Activated CD4-positive, alpha-beta memory T cell treated with anti-CD3 and anti-CD28 coated beads, Interleukin-2, amount 10 ng/mL, durations not matched to agents 7 days and 5 days (primary cell): ENCODE measurements at regions of chr11 and their contacts with region 1.

Region 1: DNA sequence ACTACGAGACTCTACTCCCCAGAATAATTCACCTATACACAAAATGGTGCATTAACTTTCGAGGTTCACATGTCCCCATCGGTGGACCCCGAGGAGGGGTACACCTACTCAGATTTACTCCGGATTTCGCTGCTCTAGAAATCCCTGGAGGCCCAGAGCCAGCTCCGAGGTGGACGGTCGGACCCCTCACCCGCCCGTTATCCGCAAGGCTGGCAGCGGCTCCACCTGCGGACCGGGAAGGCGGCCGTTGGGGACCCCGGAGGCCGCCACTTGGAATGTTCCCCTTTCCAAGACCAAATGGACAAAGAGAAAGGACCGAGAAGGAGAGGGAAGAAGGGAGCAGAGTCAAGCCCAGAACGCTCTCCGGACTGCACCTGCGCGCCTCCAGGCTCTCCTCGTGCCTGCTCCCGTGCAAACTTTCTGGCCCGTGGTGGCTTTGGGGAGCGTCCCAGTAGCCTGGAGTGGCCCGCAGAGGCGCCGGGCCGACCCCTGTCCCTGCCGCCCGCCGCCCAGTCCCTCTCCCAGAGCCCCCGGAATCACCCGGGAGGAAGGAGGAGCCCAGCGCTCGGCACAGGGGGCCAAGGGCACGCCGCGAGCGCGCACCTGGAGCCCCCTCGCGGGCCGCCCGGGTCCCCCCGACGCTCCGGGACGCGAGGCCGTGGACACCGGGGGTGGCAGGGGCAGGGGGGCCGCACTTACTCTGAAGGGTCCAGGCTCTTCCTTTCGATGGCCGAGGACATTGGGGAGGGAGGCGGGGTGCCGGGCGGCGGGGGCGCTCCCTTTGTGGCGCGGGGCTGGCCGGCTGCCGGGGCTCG is 23.0 kb downstream of the LMO2 start:
- DNase-seq: no peak
- H3K4me3 Mint-ChIP-seq: no peak overlapping the region
- H3K27ac Mint-ChIP-seq: no peak overlapping the region
- H3K4me1 Mint-ChIP-seq: peaks cover 11% of the 10 kb centered on the region
- H3K27me3 Mint-ChIP-seq: peaks cover 75% of the 10 kb centered on the region

Region 2: GRCh38 chr11:33857933-33858371 is 10.9 kb before region 1 on chr11:
- CTCF ChIA-PET with region 1: interaction called, 11 read pairs
- POLR2A ChIA-PET with region 1: no interaction called
- DNase-seq: peak; percentile 71
- H3K4me3 Mint-ChIP-seq: no peak overlapping the region
- H3K27ac Mint-ChIP-seq: no peak overlapping the region
- H3K4me1 Mint-ChIP-seq: no peaks in the 10 kb centered on the region
- H3K27me3 Mint-ChIP-seq: peaks cover 62% of the 10 kb centered on the region

Region 3: GRCh38 chr11:33881651-33882503 is 13.0 kb after region 1 on chr11:
- CTCF ChIA-PET with region 1: no interaction called
- POLR2A ChIA-PET with region 1: no interaction called
- DNase-seq: no peak
- H3K4me3 Mint-ChIP-seq: no peak overlapping the region
- H3K27ac Mint-ChIP-seq: no peak overlapping the region
- H3K4me1 Mint-ChIP-seq: no peaks in the 10 kb centered on the region
- H3K27me3 Mint-ChIP-seq: peaks cover 78% of the 10 kb centered on the region

Region 4: GRCh38 chr11:33899383-33900037 is 30.7 kb after region 1 on chr11:
- CTCF ChIA-PET with region 1: no interaction called
- POLR2A ChIA-PET with region 1: no interaction called
- DNase-seq: no peak
- H3K4me3 Mint-ChIP-seq: no peak overlapping the region
- H3K27ac Mint-ChIP-seq: no peak overlapping the region
- H3K4me1 Mint-ChIP-seq: peaks cover 3% of the 10 kb centered on the region
- H3K27me3 Mint-ChIP-seq: peaks cover 64% of the 10 kb centered on the region

Region 5: DNA sequence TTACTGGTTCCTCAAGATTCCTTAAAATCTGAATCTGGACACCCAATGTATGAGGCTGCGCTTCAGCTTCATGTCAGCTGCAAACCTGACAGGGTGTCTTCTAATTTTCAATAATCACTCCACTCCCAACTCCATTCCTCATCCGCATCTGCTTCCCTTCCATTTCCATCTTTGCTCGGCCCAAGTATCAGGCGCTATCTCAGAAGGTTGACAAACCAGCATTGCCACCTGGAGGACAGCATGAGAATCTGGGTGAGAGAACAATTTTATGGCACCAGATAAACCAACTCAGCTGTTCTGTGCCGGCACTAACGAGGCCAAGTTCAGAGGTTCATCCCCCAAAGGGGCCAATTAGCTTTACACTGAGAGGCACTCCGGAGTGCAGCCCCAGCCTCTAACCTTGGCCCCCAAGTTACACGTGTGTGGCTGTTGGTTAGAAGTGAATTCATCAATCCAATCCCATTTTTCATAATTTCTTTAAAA is 102.2 kb after region 1 on chr11:
- CTCF ChIA-PET with region 1: no interaction called
- POLR2A ChIA-PET with region 1: no interaction called
- DNase-seq: no peak
- H3K4me3 Mint-ChIP-seq: no peak overlapping the region
- H3K27ac Mint-ChIP-seq: no peak overlapping the region
- H3K4me1 Mint-ChIP-seq: no peaks in the 10 kb centered on the region
- H3K27me3 Mint-ChIP-seq: peaks cover 20% of the 10 kb centered on the region